ENCODE measurements at regions of chr13 and their contacts with region 1.

Region 1: DNA sequence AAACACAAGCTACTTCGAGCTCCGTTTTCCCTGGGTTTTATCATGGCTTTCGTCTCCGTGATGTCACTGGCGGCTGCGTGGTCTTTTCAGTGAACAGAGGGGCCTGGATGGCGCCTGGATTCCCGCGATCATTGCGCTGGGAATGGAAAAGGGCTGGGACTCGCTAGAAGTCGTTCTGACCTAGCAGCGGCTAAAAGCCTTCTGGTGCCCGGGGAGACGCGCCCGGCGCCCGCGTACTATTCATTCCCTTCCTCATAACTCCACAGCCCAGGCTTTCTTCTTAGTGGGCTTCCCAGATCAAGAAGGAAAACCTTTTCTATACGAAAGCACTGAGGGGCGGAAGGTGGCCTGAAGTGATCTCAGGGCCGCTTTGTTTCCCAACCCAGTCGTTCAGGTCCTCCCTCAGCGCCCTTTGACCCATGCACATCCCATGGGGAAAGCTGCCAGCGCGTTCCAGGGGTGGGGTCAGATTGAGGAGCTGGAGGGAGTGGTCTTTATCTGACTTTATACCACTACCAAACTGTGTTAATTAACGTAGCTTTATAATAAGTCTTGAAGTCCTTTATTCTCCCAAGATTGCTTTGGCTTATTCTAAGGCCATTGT is 96.6 kb downstream of the ELF1 start:
- DNase-seq: no peak
- H3K4me3 Mint-ChIP-seq: peak overlapping the region; percentile 54
- H3K27ac Mint-ChIP-seq: peak overlapping the region; percentile 61
- H3K4me1 Mint-ChIP-seq: peaks cover 15% of the 10 kb centered on the region
- H3K27me3 Mint-ChIP-seq: no peaks in the 10 kb centered on the region

Region 2: DNA sequence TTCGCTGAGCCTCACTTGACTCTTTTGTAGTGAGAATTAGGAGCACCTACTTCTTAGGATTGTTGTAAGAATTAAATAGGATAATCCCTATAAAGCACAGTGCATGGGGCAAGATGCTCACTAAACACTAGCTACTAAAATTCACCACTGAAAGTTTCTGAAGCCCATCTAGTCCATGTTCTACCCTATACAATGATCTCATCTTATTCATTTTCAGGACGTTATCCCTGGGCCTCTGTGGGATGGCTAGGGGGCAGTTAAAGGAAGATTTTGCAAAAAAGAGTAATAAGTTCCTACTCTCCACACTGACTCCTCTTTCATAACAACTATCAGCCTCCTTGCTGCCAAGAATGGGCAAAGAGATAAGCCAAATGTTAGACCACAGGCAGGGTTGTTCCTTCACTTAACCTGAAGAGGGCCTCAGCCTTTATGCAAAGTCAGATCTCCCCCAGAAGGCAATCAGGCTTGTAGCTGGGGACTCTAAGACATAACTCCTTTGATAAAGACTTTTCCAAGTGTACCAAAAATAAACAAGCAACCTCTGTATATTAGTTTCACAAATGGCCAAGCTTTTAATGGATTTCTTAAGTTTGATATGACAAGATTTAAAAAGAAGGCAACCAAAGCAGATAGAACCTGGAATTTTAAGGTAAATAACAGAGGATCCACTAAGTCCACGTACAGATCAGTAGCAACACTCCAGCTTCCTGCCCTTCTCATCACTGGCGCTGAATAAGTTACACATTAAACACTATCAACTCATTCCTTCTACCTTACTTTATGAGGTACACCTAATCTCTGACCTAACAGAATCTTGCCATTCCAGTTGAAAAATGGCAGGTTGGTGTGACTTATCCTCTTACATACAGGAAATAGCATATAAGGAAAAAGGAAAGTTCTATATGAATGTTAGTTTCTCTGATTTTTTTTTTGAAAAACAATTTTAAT is 52.2 kb after region 1 on chr13:
- CTCF ChIA-PET with region 1: interaction called, 5 read pairs
- intact Hi-C with region 1: loop called (anchors 2 kb)
- DNase-seq: peak; percentile 63
- H3K4me3 Mint-ChIP-seq: peak overlapping the region; percentile 36
- H3K27ac Mint-ChIP-seq: peak overlapping the region; percentile 94
- H3K4me1 Mint-ChIP-seq: peaks cover 83% of the 10 kb centered on the region
- H3K27me3 Mint-ChIP-seq: no peaks in the 10 kb centered on the region

Region 3: DNA sequence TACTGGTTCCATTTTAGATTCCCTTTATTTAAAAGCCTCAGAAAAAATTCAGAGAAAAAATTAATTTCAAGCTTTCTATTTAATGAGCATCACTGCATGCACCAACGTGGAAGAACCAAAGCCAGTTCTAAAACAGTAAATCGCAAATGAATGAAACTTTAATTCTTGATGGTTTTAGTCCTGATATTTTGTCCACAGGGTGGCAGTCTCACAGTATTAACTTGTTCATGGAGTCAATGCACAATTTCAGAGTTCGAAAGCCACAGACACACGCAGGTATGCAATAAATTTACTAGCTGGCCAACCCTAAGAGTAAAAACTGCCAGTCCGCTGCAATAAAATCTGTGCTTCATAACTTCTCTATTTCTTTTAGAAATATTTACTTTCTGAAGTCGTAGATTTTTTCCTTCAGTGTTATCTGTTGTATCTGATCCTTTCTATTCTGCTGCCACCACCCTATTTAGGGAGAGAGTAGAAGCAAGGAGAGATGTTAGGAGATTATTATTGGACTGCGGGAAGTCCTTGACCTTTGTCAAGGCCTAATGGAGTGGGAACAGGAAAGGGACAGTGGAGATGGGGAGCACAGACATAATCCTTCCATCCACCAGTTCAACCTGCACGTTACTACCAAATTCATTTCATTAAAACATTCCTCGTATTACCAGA is 131.8 kb after region 1 on chr13:
- CTCF ChIA-PET with region 1: interaction called, 10 read pairs
- intact Hi-C with region 1: no loop called
- DNase-seq: peak; percentile 57
- H3K4me3 Mint-ChIP-seq: no peak overlapping the region
- H3K27ac Mint-ChIP-seq: no peak overlapping the region
- H3K4me1 Mint-ChIP-seq: peaks cover 65% of the 10 kb centered on the region
- H3K27me3 Mint-ChIP-seq: no peaks in the 10 kb centered on the region

Region 4: GRCh38 chr13:41132512-41133152 is 210.1 kb after region 1 on chr13 and contains the start of gene KBTBD6:
- CTCF ChIA-PET with region 1: no interaction called
- intact Hi-C with region 1: loop called (anchors 1 kb)
- DNase-seq: peak; percentile 98
- H3K4me3 Mint-ChIP-seq: peak within 1 kb of the TSS; percentile 92
- H3K27ac Mint-ChIP-seq: peak within 1 kb of the TSS; percentile 87
- H3K4me1 Mint-ChIP-seq: peaks cover 35% of the 10 kb centered on the region
- H3K27me3 Mint-ChIP-seq: no peaks in the 10 kb centered on the region
- total RNA-seq, gene KBTBD6: 3.9 to 4.0 TPM

Region 5: DNA sequence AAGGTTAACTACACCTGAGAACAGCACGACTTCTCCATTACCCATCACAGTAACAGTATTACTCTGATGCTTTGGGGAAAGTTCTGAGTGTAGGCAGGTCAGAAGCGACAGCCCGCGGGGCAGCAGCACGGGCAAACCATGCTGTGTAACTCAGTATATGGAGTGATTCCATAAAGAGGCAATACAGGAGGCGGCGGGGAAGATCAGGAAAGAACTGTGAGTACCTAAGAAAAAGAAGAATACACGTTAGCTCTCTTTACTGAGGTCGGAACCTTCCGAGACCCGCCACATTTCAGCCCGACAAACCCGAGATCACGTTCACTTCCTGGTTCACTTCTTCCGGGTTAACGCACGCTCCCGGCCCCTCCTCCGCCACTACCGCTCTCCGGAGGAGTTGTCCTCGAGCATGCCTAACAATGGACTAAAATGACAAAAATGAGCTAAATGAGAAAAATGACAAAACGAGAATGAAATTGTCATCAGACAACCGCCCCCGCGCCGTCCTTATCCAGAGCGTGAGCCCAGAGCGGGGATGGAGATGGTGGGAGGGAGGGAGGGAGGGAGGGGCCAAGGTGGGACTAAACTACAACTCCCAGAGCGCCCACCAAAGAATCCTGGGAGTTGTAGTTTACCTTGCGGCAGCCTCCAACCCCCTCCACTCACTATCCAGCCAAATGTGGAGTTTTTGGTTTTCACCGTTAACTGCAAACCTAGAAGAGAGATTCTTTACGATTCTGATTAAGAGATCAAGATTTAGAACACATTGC is 340.9 kb after region 1 on chr13 and contains the start of gene MTRF1:
- CTCF ChIA-PET with region 1: no interaction called
- intact Hi-C with region 1: loop called (anchors 1 kb)
- DNase-seq: peak; percentile 84
- H3K4me3 Mint-ChIP-seq: peak within 1 kb of the TSS; percentile 90
- H3K27ac Mint-ChIP-seq: peak within 1 kb of the TSS; percentile 95
- H3K4me1 Mint-ChIP-seq: peaks cover 24% of the 10 kb centered on the region
- H3K27me3 Mint-ChIP-seq: no peaks in the 10 kb centered on the region
- total RNA-seq, gene MTRF1: 23.2 to 28.4 TPM

Measured in activated naive CD4-positive, alpha-beta T cell treated with anti-CD3 and anti-CD28 coated beads for 36 hours (primary cell).